Activated CD4-positive, alpha-beta T cell treated with anti-CD3 and anti-CD28 coated beads for 36 hours (primary cell): ENCODE measurements at regions of chrX and their contacts with region 1.

Region 1: GRCh38 chrX:48801280-48802088 is at the start of gene HDAC6:
- DNase-seq: peak; percentile 96
- ATAC-seq: peak; percentile 89
- H3K4me3 Mint-ChIP-seq: peak within 1 kb of the TSS; percentile 90
- H3K27ac Mint-ChIP-seq: peak within 1 kb of the TSS; percentile 98
- H3K4me1 Mint-ChIP-seq: peaks cover 15% of the 10 kb centered on the region
- H3K27me3 Mint-ChIP-seq: no peaks in the 10 kb centered on the region
- total RNA-seq, gene HDAC6: 59.2 to 69.7 TPM

Region 2: GRCh38 chrX:48521353-48522243 is 279.9 kb before region 1 on chrX and contains the start of gene EBP:
- CTCF ChIA-PET with region 1: no interaction called
- POLR2A ChIA-PET with region 1: interaction called, 3 read pairs
- intact Hi-C with region 1: loop called in 1 of 2 experiments (anchors 5 kb)
- DNase-seq: peak; percentile 97
- ATAC-seq: peak; percentile 94
- H3K4me3 Mint-ChIP-seq: peak within 1 kb of the TSS; percentile 89
- H3K27ac Mint-ChIP-seq: peak within 1 kb of the TSS; percentile 98
- H3K4me1 Mint-ChIP-seq: peaks cover 15% of the 10 kb centered on the region
- H3K27me3 Mint-ChIP-seq: no peaks in the 10 kb centered on the region
- total RNA-seq, gene EBP: 137 to 140 TPM

Region 3: DNA sequence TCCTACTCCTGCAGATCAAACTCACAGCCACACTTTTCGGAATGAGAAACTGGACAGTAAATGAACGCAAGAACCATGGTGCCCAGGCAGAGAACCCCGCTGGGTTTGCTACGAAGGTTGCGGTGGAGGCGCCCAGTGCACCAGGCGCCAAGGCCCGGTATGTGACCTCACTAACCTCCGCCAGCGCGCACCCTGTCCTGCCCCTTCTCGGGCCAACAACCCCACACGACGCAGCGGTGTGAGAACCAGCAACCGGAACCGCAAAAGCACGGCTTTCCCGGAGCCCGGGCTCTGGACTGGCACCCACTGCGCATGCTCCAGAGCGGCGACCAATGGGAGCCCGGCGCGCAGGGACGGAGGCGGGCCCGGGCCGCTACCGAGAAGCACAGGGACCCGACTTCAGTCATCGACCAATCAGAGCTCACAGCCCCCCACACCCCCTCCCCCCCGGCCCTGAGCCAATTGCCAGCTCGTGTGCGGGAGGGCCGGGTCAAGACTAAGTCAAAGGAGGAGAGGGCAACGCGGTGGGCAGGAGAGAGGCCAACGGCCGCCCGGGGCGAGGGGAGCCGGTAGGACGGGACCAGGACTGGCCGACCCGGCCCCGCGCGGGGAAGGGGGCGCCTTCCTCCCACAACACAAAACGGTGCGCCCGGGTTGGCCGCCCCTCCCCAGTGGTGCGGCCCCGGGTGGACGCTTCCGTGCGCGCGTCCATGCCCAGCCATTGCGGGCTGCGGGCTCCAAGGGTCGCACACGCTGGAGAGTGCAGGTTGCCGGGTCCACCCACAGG is 125.2 kb before region 1 on chrX:
- CTCF ChIA-PET with region 1: no interaction called
- POLR2A ChIA-PET with region 1: no interaction called
- intact Hi-C with region 1: loop called (anchors 1 to 5 kb)
- DNase-seq: peak; percentile 92
- ATAC-seq: peak; percentile 95
- H3K4me3 Mint-ChIP-seq: peak overlapping the region; percentile 90
- H3K27ac Mint-ChIP-seq: peak overlapping the region; percentile 91
- H3K4me1 Mint-ChIP-seq: peaks cover 19% of the 10 kb centered on the region
- H3K27me3 Mint-ChIP-seq: no peaks in the 10 kb centered on the region

Region 4: GRCh38 chrX:48891402-48892288 is 90.2 kb after region 1 on chrX:
- CTCF ChIA-PET with region 1: no interaction called
- POLR2A ChIA-PET with region 1: no interaction called
- intact Hi-C with region 1: loop called in 1 of 2 experiments (anchors 1 kb)
- DNase-seq: peak; percentile 85
- ATAC-seq: peak; percentile 92
- H3K4me3 Mint-ChIP-seq: peak overlapping the region; percentile 79
- H3K27ac Mint-ChIP-seq: peak overlapping the region; percentile 55
- H3K4me1 Mint-ChIP-seq: peaks cover 23% of the 10 kb centered on the region
- H3K27me3 Mint-ChIP-seq: no peaks in the 10 kb centered on the region

Region 5: GRCh38 chrX:48957827-48958634 is 156.5 kb after region 1 on chrX:
- CTCF ChIA-PET with region 1: no interaction called
- POLR2A ChIA-PET with region 1: no interaction called
- intact Hi-C with region 1: loop called in 1 of 2 experiments (anchors 1 kb)
- DNase-seq: peak; percentile 95
- ATAC-seq: peak; percentile 92
- H3K4me3 Mint-ChIP-seq: peak overlapping the region; percentile 93
- H3K27ac Mint-ChIP-seq: peak overlapping the region; percentile 100
- H3K4me1 Mint-ChIP-seq: peaks cover 28% of the 10 kb centered on the region
- H3K27me3 Mint-ChIP-seq: no peaks in the 10 kb centered on the region

Region 6: GRCh38 chrX:49067283-49068120 is 266.0 kb after region 1 on chrX:
- CTCF ChIA-PET with region 1: no interaction called
- POLR2A ChIA-PET with region 1: no interaction called
- intact Hi-C with region 1: no loop called
- DNase-seq: no peak
- ATAC-seq: no peak
- H3K4me3 Mint-ChIP-seq: no peak overlapping the region
- H3K27ac Mint-ChIP-seq: no peak overlapping the region
- H3K4me1 Mint-ChIP-seq: peaks cover 3% of the 10 kb centered on the region
- H3K27me3 Mint-ChIP-seq: no peaks in the 10 kb centered on the region

Region 7: DNA sequence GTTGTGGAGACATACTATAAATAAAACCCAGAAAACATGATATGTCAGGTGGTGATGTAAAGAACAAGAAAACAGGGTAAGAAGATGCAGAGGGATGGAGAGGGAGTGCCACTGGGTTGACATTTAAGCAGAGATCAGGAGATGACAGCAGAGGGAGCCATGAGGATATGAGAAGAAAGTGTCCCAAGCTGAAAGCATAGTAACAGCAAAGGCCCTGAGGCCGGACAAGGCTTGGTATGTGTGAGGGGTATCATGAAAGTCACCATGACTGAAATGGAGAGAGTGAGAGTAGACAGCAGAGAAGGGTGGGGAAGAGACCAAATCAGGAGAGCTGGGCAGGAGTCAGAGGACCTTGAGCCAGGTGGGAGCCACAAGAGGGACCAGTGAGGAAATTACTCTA is 318.6 kb after region 1 on chrX:
- CTCF ChIA-PET with region 1: no interaction called
- POLR2A ChIA-PET with region 1: no interaction called
- intact Hi-C with region 1: loop called in 1 of 2 experiments (anchors 2 kb)
- DNase-seq: no peak
- ATAC-seq: no peak
- H3K4me3 Mint-ChIP-seq: no peak overlapping the region
- H3K27ac Mint-ChIP-seq: peak overlapping the region; percentile 56
- H3K4me1 Mint-ChIP-seq: peaks cover 20% of the 10 kb centered on the region
- H3K27me3 Mint-ChIP-seq: no peaks in the 10 kb centered on the region